MCF 10A (cell line): ENCODE measurements at regions of chr15 and their contacts with region 1.

Region 1: DNA sequence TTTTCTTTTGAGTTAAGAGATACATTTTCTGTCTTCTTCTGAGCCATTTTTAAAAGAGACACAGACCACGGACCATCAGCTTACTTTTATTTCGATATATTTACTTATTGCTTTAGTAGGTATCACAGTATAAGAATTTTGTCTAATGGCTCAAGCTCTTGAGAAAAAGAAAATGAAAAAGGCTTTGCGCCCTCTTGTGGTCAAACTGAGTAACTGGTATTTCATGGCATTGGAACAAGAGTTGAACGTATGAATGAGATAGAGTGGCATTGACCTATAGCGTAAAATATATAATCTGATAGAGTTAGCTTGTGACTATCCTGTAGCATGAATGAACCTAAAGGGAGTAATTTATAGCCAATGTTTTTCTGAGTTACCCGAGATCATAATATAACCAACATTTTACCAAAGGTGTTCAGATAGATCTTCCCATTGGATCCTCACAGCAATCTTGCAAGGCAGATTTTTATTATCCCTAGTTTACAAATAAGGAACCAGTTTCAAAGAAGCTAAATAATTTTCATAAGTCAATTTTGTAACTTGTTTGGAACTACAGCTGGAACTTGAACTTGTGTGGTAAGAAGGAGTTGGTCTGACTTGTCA is 154.6 kb downstream of the POLR2M start:
- DNase-seq: peak; percentile 75
- H3K4me3 Mint-ChIP-seq: no peak overlapping the region
- H3K27ac Mint-ChIP-seq: no peak overlapping the region
- H3K4me1 Mint-ChIP-seq: peaks cover 19% of the 10 kb centered on the region
- H3K27me3 Mint-ChIP-seq: no peaks in the 10 kb centered on the region
- CTCF ChIP-seq: peak; percentile 69

Region 2: GRCh38 chr15:57561041-57561711 is 300.0 kb before region 1 on chr15:
- CTCF ChIA-PET with region 1: interaction called, 10 read pairs
- POLR2A ChIA-PET with region 1: no interaction called
- intact Hi-C with region 1: no loop called
- DNase-seq: peak; percentile 87
- H3K4me3 Mint-ChIP-seq: no peak overlapping the region
- H3K27ac Mint-ChIP-seq: no peak overlapping the region
- H3K4me1 Mint-ChIP-seq: peaks cover 18% of the 10 kb centered on the region
- H3K27me3 Mint-ChIP-seq: no peaks in the 10 kb centered on the region
- CTCF ChIP-seq: peak; percentile 86

Region 3: GRCh38 chr15:57640935-57641682 is 220.0 kb before region 1 on chr15:
- CTCF ChIA-PET with region 1: interaction called, 17 read pairs
- POLR2A ChIA-PET with region 1: no interaction called
- intact Hi-C with region 1: no loop called
- DNase-seq: peak; percentile 51
- H3K4me3 Mint-ChIP-seq: no peak overlapping the region
- H3K27ac Mint-ChIP-seq: no peak overlapping the region
- H3K4me1 Mint-ChIP-seq: no peaks in the 10 kb centered on the region
- H3K27me3 Mint-ChIP-seq: no peaks in the 10 kb centered on the region
- CTCF ChIP-seq: peak; percentile 8

Region 4: GRCh38 chr15:57732526-57733331 is 128.4 kb before region 1 on chr15:
- CTCF ChIA-PET with region 1: interaction called, 39 read pairs
- POLR2A ChIA-PET with region 1: interaction called, 4 read pairs
- intact Hi-C with region 1: loop called (anchors 1 kb)
- DNase-seq: peak; percentile 71
- H3K4me3 Mint-ChIP-seq: no peak overlapping the region
- H3K27ac Mint-ChIP-seq: no peak overlapping the region
- H3K4me1 Mint-ChIP-seq: peaks cover 6% of the 10 kb centered on the region
- H3K27me3 Mint-ChIP-seq: no peaks in the 10 kb centered on the region
- CTCF ChIP-seq: peak; percentile 80

Region 5: DNA sequence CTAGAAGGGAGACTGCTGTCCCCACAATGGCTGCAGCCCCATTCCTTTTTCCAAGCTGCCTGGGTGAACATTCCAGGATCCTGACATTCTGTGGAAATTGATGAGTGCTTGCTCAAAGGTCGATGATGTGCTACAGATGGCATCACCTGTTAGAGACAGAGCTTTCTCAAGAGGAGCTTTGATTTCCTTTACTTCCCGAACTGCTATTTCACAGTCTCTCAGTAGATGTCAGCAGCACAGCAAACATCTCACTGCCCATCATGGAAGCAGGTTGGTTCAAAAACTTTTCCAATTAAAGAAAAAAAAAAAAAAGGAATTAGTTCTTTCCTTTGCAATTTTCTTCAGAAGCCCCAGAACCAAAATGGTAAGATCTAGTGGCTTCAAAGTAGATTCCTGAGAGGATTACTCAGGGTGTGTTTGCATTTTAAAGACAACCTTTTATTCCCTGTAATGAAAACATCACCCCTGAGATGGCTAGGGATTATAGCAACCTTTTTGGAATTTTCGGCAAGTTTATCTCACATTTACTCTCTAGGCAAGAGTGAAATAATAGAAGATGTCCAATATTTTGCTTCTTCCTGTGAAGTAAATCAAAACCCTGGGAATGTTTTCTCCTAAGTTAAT is 109.8 kb before region 1 on chr15:
- CTCF ChIA-PET with region 1: interaction called, 138 read pairs
- POLR2A ChIA-PET with region 1: interaction called, 5 read pairs
- intact Hi-C with region 1: loop called (anchors 1 kb)
- DNase-seq: peak; percentile 51
- H3K4me3 Mint-ChIP-seq: no peak overlapping the region
- H3K27ac Mint-ChIP-seq: no peak overlapping the region
- H3K4me1 Mint-ChIP-seq: no peaks in the 10 kb centered on the region
- H3K27me3 Mint-ChIP-seq: no peaks in the 10 kb centered on the region
- CTCF ChIP-seq: peak; percentile 59

Region 6: DNA sequence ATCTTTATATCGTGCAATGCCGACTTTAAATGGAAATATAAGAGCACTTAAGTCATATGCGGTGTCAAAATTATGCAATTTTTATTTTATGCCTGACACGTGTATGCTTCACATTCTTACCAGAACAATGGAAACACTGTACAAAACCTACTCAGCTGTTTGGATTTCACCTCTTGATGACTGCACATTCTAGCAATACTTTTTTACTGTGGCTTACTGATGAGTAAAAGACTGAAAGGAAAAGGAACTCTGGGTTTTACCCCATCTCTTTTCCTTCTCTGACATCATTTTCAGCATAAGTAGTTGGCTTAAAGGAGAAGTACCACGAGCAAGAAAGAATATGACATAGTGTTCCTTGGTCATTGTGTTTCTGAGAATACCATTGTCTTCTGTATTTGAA is 11.8 kb before region 1 on chr15:
- CTCF ChIA-PET with region 1: interaction called, 18 read pairs
- POLR2A ChIA-PET with region 1: no interaction called
- intact Hi-C with region 1: no loop called
- DNase-seq: no peak
- H3K4me3 Mint-ChIP-seq: no peak overlapping the region
- H3K27ac Mint-ChIP-seq: no peak overlapping the region
- H3K4me1 Mint-ChIP-seq: no peaks in the 10 kb centered on the region
- H3K27me3 Mint-ChIP-seq: peaks cover 10% of the 10 kb centered on the region
- CTCF ChIP-seq: no peak